ENCODE measurements at regions of chr19 and their contacts with region 1.

Region 1: DNA sequence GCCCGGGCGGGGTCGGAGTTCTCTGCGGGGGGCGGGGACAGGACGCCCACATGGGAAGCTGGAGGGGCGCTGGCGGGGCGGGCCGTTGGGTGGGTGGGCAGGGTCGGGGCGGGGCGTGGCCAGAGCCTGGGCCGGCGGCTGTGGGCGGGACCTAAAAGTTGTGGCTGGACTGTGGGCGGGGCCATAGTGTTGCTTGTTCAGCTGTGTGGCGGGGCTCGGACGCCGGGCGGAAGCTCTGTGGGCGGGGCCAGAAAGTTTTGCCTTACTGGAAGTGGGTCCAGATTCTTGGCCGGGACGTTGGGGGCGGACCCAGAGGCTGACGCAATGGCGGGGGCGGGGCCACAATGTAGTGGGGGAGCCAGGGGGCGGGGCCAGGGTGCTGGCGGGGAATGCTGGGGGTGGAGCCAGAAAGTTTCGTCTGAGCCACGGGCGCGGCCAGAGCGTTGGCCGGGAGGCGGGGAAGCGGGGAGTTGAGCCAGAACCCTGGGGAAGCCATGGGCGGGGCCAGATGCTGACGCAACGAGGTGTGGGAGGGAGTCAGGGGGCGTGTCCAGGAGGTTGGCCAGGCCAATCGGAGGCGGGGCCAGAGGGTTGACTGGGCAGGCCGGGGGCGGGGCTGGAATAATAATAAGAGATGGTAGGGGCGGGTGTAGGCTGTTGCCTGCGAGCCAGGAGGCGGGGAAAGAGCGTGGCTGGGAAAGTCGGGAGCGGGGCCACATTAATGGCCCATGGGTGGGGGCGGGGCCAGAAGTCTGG is 541 bp downstream of the CCDC9 start:
- DNase-seq: peak; percentile 95 to 100
- H3K4me3 ChIP-seq: peak overlapping the region; percentile 68; the same call in 1 of the 2 replicates
- H3K27ac ChIP-seq: peak overlapping the region; percentile 80
- H3K4me1 ChIP-seq: peaks cover 43% of the 10 kb centered on the region
- H3K27me3 ChIP-seq: no peaks in the 10 kb centered on the region
- CTCF ChIP-seq: no peak

Region 2: DNA sequence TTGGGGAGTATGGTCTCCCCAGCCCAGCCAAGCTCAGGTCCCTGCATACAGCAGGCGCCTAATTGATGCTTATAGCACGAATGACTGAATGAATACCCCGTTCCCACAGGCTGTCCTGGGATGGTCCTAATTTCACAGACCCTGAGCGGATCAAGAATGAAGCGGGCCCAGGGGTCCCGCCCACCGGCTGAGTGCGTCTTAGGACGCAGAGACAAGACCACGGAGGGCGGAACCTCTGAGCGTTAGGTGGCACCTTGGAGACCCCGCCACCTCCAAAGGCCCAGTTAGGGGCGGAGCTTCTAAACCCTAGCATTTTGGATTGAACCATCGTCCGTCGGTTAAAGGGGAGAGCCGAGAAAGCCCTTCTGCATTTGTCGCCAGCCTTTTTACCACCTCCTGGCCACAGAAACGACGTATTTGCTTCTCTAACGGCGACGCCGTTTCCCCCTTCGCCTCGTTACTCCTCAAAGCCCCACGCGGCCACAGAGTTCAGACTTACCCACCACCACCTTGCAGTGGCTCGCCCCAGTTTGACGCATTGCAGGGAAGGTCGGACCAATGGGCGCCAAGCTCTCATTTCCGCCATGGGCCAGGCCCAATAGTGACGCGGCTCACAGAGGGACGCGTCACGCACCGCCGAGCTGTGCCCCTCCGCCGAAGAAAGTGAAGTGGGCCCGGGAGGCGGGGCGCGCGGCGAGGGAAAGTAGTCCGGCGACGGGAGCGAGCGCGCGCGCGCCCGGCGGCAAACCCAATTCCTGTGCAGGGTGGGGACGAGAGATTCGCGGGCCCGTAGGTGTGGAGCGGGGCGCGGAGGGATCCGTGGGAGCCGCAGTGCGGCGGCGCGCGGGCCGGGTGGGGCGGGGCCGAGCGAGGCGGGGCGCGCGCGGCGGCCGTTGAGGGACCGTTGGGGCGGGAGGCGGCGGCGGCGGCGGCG is 656.2 kb before region 1 on chr19:
- CTCF ChIA-PET with region 1: interaction called, 4 read pairs
- POLR2A ChIA-PET with region 1: interaction called, 16 read pairs
- intact Hi-C with region 1: no loop called
- DNase-seq: peak; percentile 91 to 96
- H3K4me3 ChIP-seq: peak overlapping the region; percentile 100
- H3K27ac ChIP-seq: peak overlapping the region; percentile 93
- H3K4me1 ChIP-seq: peaks cover 12% of the 10 kb centered on the region; the same call in 1 of the 2 replicates
- H3K27me3 ChIP-seq: no peaks in the 10 kb centered on the region
- CTCF ChIP-seq: no peak

Region 3: GRCh38 chr19:47057328-47057727 is 199.5 kb before region 1 on chr19:
- CTCF ChIA-PET with region 1: no interaction called
- POLR2A ChIA-PET with region 1: interaction called, 21 read pairs
- intact Hi-C with region 1: no loop called
- DNase-seq: no peak
- H3K4me3 ChIP-seq: no peak overlapping the region
- H3K27ac ChIP-seq: no peak overlapping the region
- H3K4me1 ChIP-seq: peaks cover 5% of the 10 kb centered on the region; the same call in 1 of the 2 replicates
- H3K27me3 ChIP-seq: no peaks in the 10 kb centered on the region
- CTCF ChIP-seq: no peak

Region 4: GRCh38 chr19:47152224-47153017 is 104.4 kb before region 1 on chr19:
- CTCF ChIA-PET with region 1: no interaction called
- POLR2A ChIA-PET with region 1: no interaction called
- intact Hi-C with region 1: loop called (anchors 1 kb)
- DNase-seq: peak; percentile 44 to 98
- H3K4me3 ChIP-seq: peak overlapping the region; percentile 41
- H3K27ac ChIP-seq: peak overlapping the region; percentile 84
- H3K4me1 ChIP-seq: peaks cover 64% of the 10 kb centered on the region
- H3K27me3 ChIP-seq: no peaks in the 10 kb centered on the region
- CTCF ChIP-seq: 0 out of 2 replicates have a peak, but pooled peaks have one; percentile 18

Region 5: DNA sequence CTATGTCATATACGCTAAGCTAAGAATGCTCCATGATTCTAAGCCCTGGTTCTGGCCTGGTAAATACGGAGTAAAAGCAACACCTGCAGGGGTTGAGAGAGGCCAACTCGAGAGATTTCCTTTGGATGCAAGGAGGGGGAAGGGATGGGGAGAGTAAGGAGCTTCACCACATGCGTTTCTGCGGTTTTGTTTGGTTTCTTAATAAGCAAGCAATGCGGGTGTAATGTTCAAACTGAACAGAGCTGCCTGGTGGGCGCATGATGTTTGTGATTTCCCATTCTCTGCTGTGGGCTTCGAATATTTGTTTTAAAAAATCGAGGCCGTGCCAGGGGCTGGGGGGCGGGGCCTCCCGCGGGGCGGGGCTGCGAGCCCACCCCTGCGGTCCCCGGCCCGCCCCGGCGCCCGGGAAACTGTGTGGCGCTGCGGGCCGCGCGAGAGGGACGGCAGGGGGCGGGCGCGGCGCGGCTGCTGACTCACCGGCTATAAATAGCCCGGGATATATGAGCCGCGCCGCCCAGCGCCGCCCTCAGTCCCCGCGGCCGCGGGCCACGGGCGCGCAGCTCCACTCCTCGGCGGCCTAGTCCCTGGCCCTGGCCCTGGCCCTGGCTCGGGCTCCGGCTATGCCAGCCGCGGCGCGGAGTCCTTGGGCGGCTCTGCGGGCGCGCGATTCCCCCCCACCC is 31.0 kb before region 1 on chr19:
- CTCF ChIA-PET with region 1: no interaction called
- POLR2A ChIA-PET with region 1: interaction called, 5 read pairs
- intact Hi-C with region 1: loop called (anchors 1 kb)
- DNase-seq: peak; percentile 64 to 88
- H3K4me3 ChIP-seq: peak overlapping the region; percentile 99
- H3K27ac ChIP-seq: peak overlapping the region; percentile 57
- H3K4me1 ChIP-seq: peaks cover 38% of the 10 kb centered on the region
- H3K27me3 ChIP-seq: no peaks in the 10 kb centered on the region
- CTCF ChIP-seq: no peak

Region 6: DNA sequence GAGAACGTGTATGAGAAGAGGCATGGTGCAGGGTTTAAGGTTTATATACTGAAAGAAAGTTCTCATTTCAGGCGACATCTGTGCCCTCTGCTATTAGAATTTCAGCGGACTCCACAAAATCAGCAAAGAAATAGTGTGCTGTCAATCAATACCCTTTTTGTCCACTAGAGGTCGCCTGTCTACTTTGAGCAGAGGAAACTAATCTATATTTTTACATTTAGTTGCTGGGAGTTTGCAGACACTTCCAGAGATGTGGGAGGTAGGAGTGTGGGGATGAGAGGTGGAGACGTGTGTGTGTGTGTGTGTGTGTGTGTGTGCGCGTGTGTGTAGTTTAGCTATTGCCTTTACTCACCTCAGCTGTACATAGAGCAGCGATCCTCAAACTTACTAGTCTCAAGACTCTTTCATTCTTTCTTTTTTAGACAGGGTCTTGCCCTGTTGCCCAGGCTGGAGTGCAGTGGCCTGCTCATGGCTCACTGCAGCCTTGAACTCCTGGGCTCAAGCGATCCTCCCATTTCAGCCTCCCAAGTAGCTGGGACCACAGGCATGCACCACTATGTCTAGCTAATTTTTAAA is 27.5 kb after region 1 on chr19:
- CTCF ChIA-PET with region 1: interaction called, 3 read pairs
- POLR2A ChIA-PET with region 1: no interaction called
- intact Hi-C with region 1: loop called (anchors 1 kb)
- DNase-seq: peak; percentile 41 to 56
- H3K4me3 ChIP-seq: no peak overlapping the region
- H3K27ac ChIP-seq: no peak overlapping the region
- H3K4me1 ChIP-seq: peaks cover 29% of the 10 kb centered on the region
- H3K27me3 ChIP-seq: no peaks in the 10 kb centered on the region
- CTCF ChIP-seq: peak; percentile 96

Region 7: GRCh38 chr19:47450478-47450877 is 193.6 kb after region 1 on chr19:
- CTCF ChIA-PET with region 1: interaction called, 10 read pairs
- POLR2A ChIA-PET with region 1: no interaction called
- intact Hi-C with region 1: no loop called
- DNase-seq: no peak
- H3K4me3 ChIP-seq: no peak overlapping the region
- H3K27ac ChIP-seq: no peak overlapping the region
- H3K4me1 ChIP-seq: no peaks in the 10 kb centered on the region
- H3K27me3 ChIP-seq: peaks cover 80% of the 10 kb centered on the region
- CTCF ChIP-seq: no peak

Measured in PC-9 (cell line).